GM18951 (cell line): ENCODE measurements at regions of chr3 and their contacts with region 1.

Region 1: GRCh38 chr3:42229942-42230688 is 35.9 kb downstream of the CCK start:
- POLR2A ChIP-seq: no peak

Region 2: GRCh38 chr3:41893977-41894376 is 336.1 kb before region 1 on chr3:
- in situ Hi-C with region 1: loop called (anchors 10 kb)
- POLR2A ChIP-seq: no peak

Region 3: DNA sequence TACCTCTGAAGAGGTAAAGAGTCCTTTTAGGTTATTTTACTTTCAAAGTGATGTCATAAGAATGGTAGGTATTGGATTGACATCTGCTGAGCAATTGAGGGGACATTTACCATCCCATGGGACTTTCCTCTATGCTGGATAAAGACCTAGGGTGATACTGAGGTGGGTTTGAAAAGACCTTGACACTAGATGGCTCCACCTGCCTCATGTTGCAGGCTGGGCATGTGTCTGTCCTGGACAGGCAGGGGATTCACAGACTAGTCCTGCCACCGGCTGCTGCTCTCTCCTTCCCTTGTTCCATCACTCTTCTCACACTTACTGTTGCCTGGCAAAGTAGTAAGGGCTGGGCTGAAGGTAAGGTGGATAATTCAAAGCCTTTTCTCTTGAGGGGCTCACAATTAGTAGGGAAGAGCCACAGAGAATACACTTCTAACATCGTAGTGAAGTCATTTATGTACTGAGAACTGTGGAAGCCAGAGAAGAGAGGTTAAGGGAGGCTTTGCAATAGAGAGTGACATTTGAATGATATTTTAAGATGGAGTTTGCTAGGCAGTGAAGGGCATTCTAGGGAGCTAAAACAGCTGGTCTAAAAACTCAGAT is 111.3 kb before region 1 on chr3:
- in situ Hi-C with region 1: loop called (anchors 10 kb)
- POLR2A ChIP-seq: no peak

Region 4: DNA sequence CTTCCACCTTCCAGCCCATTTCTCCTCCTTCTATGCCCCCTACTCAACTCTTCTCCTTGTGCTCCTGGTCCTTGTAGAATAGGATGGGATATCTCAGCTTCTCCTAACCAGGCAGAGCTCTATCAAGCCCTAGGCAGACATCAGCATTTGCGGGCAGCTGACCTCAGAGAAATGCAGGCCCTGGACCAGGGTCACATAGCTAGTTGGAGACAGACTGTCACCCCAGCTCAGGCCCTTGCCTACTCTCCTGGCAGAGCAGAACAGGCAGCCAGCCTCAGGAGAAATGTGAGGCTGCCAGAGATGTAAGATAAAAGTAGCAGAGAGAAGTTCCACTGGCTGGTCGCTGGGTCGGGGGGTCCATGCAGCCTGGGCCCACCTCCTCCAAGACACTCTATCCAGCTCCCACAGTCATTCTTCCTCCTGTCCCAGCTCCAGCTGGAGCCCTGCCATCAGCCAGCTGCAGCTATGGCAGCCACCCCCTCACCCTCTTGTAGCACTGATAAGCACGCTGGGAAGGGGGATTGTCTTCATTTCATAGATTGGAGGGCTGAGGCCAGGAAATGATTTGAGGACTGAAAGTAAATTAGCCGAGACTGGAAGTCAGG is 641.6 kb after region 1 on chr3:
- in situ Hi-C with region 1: no loop called
- POLR2A ChIP-seq: no peak